ENCODE measurements at regions of chr18 and their contacts with region 1.

Region 1: GRCh38 chr18:61496374-61496773 is 163.1 kb downstream of the CDH20 start:
- DNase-seq: no peak
- H3K4me3 ChIP-seq: no peak overlapping the region
- H3K27ac ChIP-seq: no peak overlapping the region
- H3K4me1 ChIP-seq: no peaks in the 10 kb centered on the region
- H3K27me3 ChIP-seq: no peaks in the 10 kb centered on the region
- CTCF ChIP-seq: no peak

Region 2: GRCh38 chr18:59996370-59996966 is 1499.9 kb before region 1 on chr18:
- intact Hi-C with region 1: loop called (anchors 10 kb)
- DNase-seq: no peak
- H3K4me3 ChIP-seq: no peak overlapping the region
- H3K27ac ChIP-seq: no peak overlapping the region
- H3K4me1 ChIP-seq: no peaks in the 10 kb centered on the region
- H3K27me3 ChIP-seq: no peaks in the 10 kb centered on the region
- CTCF ChIP-seq: peak in 1 of 2 experiments; percentile 6

Region 3: GRCh38 chr18:61554117-61554776 is 57.9 kb after region 1 on chr18:
- intact Hi-C with region 1: no loop called
- DNase-seq: no peak
- H3K4me3 ChIP-seq: no peak overlapping the region
- H3K27ac ChIP-seq: no peak overlapping the region
- H3K4me1 ChIP-seq: peaks cover 0 to 6% (median 0%) of the 10 kb centered on the region in 4 donors
- H3K27me3 ChIP-seq: no peaks in the 10 kb centered on the region
- CTCF ChIP-seq: no peak

Region 4: GRCh38 chr18:61702007-61702406 is 205.6 kb after region 1 on chr18:
- intact Hi-C with region 1: no loop called
- DNase-seq: no peak
- H3K4me3 ChIP-seq: no peak overlapping the region
- H3K27ac ChIP-seq: peak overlapping the region; percentile 52 to 62
- H3K4me1 ChIP-seq: peaks cover 0 to 29% (median 10%) of the 10 kb centered on the region in 4 donors
- H3K27me3 ChIP-seq: no peaks in the 10 kb centered on the region
- CTCF ChIP-seq: no peak

Measured in tibial artery (tissue), 4 donors.